BJ (cell line): ENCODE measurements at regions of chr20 and their contacts with region 1.

Region 1: DNA sequence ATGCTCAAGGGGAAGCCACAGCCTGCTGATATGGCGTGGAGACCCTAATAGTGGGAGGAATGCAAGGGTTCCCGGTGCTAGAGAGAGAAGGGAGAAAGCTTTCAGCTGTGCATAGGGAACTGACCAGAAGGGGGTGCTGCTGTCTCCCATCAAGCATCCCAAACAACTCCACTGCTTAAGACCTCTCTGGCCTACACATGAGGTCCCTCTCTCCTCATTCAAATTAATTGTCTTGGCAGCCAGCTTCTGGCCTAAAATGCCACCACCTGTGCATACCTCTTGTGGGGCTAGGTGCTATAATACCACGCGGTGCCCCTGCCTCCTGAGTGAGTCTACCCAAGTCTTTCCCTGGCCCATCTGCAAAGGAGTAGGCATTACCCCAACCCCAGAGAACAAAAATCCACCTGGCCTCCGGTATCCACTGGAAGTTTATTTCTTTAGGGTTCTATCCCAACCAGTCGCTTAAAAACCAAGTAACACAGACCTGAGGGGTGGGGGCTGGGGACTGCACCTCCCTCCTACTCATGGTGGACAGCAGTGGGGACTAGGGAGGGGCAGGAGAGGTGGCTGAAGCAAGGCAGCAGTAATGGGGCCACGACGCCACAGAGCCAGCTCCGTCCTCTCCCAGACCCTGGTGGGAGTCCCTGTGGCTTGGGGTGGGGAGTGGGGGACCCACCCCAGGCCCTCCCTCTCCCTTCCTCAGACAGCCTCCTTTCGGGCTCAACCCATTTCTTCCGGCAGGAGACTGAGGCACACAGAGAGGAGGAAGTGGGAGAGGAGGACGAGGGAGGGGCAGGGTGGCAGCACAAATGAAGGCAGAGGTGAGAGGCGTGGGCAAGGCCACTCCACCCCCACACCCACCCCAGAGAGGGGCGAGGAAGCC is 14.2 kb downstream of the ADISSP start:
- DNase-seq: no peak
- H3K4me3 ChIP-seq: no peak overlapping the region
- H3K27me3 ChIP-seq: no peaks in the 10 kb centered on the region
- CTCF ChIP-seq: peak; percentile 87

Region 2: DNA sequence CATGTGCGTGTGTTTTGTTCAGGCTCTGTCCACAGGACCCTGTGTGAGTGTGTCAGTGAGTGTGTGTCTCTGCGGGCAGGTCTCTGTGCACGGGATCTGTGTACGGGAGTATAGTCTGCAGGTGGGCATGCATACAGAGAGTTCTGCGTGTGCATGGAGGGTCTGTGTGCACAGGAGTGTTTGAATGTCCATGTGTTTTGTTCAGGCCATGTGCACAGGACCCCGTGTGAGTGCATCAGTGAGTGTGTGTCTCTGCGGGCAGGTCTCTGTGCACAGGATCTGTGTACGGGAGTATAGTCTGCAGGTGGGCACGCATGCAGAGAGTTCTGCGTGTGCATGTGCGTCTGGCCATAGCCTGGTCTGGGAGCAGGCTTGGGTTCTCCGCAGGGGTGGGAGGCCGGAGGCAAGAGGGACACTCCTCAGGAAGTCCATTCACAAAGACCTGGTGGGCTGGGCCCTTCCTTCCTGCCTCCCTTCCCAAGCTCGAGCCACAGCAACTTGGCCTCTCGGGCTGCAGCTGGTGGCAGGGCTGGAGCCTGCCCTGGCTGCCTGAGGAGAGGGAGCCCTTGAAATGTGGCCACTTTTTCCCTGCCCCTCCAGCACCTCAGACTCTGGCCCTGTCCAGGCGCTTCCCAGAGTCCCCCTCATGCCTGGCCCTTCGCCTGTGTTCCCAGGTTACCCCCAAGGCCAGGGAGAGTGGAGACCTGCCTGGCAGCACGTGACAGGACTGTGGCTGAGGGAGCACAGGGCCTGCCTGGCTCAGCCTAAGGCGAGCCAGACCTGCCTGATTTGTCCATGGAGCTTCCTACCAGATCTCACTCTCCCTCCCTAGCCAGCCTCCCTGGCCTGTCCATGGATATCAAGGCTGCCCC is 14.0 kb before region 1 on chr20:
- CTCF ChIA-PET with region 1: interaction called, 12 read pairs
- POLR2A ChIA-PET with region 1: no interaction called
- DNase-seq: no peak
- H3K4me3 ChIP-seq: no peak overlapping the region
- H3K27me3 ChIP-seq: peaks cover 11% of the 10 kb centered on the region
- CTCF ChIP-seq: no peak

Region 3: GRCh38 chr20:3767427-3768341 is 14.3 kb after region 1 on chr20 and contains the start of gene ADISSP:
- CTCF ChIA-PET with region 1: interaction called, 51 read pairs
- POLR2A ChIA-PET with region 1: no interaction called
- DNase-seq: peak; percentile 85
- H3K4me3 ChIP-seq: peak within 1 kb of the TSS; percentile 73
- H3K27me3 ChIP-seq: no peaks in the 10 kb centered on the region
- CTCF ChIP-seq: peak; percentile 30
- polyA plus RNA-seq, gene ADISSP: 21.3 and 34.3 TPM in 2 replicates

Region 4: GRCh38 chr20:3781153-3781910 is 28.0 kb after region 1 on chr20 and contains the start of gene SPEF1:
- CTCF ChIA-PET with region 1: interaction called, 25 read pairs
- POLR2A ChIA-PET with region 1: no interaction called
- DNase-seq: peak; percentile 86
- H3K4me3 ChIP-seq: peak within 1 kb of the TSS; percentile 43
- H3K27me3 ChIP-seq: no peaks in the 10 kb centered on the region
- CTCF ChIP-seq: peak; percentile 60
- polyA plus RNA-seq, gene SPEF1: 0.07 and 0.17 TPM in 2 replicates

Region 5: DNA sequence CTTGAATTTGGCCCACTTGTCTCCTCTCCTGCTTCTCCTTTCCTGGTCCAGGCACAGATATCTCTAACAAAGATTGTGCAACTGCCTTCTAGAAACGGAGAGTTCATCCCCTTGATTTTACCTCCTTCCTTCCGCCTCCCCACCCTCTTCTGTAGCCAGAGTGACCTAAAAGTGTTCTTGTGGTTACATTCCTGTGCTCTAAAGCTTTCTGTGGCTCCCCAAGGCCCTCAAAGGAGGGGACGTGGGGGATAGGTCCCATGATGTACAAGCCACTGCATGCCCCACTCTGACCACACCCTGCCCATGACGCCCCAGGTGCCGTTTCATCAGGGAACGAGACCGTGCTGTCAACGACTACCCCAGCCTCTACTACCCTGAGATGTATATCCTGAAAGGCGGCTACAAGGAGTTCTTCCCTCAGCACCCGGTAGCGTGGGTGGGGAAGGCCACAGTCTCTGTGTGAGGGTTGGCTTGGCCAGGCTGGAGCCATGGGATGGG is 51.0 kb after region 1 on chr20:
- CTCF ChIA-PET with region 1: no interaction called
- POLR2A ChIA-PET with region 1: no interaction called
- DNase-seq: no peak
- H3K4me3 ChIP-seq: no peak overlapping the region
- H3K27me3 ChIP-seq: no peaks in the 10 kb centered on the region
- CTCF ChIP-seq: no peak